Activated B cell treated with CpG ODN at 0.5 μM for 24 hours (primary cell): ENCODE measurements at regions of chr6 and their contacts with region 1.

Region 1: DNA sequence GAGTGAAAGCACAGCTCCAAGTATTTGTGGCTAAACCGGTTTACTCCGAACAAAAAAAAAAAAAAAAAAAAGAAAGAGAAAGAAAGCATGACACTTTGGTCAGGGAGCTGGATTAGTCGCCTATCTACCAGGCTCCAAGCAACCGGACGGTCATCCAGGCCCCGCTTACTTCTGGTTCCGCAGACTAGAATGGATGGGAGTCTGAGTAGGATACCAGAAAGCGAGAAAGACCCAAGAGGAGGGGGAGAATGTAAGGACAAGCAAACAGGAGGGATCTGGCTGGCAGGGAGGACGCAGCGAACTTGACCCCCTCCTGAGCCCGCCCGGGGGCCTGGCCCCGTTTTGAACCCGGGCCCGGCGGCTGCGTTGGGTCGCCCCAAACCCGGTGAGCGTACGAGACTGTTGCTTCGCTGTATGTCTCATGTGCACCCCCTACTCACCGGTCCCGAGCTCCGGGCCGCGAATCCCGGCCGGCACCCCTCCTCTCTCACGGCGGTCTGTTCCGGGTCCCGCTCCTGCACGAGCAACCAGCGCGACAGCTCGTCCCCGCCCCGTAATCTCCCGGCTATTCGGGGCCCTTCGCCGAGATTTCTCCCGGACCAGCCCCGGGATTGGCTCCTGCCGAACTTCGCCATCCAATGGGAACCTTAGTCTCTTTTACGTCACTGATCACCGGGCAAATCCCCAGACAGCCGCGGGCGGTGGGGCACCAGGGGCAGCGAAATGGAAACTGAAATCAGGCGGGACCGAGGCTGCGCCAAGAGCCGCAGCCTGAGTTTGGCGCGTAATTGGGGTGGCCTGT is at the start of gene TRIM26:
- DNase-seq: peak; percentile 89
- ATAC-seq: peak; percentile 85
- H3K4me3 Mint-ChIP-seq: peak within 1 kb of the TSS; percentile 98
- H3K27ac Mint-ChIP-seq: peak within 1 kb of the TSS; percentile 99
- H3K4me1 Mint-ChIP-seq: peaks cover 61% of the 10 kb centered on the region
- H3K27me3 Mint-ChIP-seq: no peaks in the 10 kb centered on the region
- CTCF ChIP-seq: no peak
- total RNA-seq, gene TRIM26: 72.5 and 75.7 TPM in 2 replicates

Region 2: GRCh38 chr6:29926413-29927274 is 286.4 kb before region 1 on chr6:
- CTCF ChIA-PET with region 1: no interaction called
- POLR2A ChIA-PET with region 1: no interaction called
- intact Hi-C with region 1: no loop called
- DNase-seq: peak; percentile 50
- ATAC-seq: peak; percentile 77
- H3K4me3 Mint-ChIP-seq: peak overlapping the region; percentile 90
- H3K27ac Mint-ChIP-seq: peak overlapping the region; percentile 94
- H3K4me1 Mint-ChIP-seq: peaks cover 16% of the 10 kb centered on the region
- H3K27me3 Mint-ChIP-seq: no peaks in the 10 kb centered on the region
- CTCF ChIP-seq: no peak

Region 3: DNA sequence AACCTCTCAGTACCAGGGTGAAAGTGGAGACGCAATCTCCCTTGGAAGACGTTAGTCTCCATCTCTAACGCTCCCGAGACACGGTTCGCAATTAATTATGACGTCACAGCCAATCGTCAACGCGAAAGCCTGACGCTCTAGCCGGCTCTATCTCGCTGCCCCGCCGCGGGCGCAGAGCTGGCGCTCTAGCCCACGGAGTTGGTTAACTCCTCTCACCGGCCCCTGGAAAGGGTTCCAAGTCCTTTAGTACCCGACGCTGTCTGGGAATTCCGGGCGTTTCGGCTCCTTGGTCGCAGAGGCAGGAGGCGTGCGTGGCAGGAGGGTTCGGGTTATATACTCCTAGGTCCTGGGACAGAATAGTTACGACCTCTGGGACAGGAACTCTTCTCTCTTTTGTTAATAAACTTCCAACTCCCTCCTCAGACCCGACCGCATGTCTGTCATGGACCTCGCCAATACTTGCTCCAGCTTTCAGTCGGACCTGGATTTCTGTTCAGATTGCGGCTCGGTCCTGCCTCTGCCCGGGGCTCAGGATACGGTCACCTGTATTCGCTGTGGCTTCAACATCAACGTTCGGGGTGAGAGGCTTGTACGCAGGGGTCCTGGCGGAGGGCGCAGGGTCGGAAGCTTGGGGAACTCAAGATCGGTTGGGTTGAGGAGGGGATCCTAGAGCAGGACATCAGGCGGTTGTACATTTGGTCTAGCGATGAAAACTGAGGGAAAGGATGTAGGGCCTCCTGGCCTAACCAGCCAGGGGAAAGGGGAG is 151.8 kb before region 1 on chr6 and contains the start of gene POLR1H:
- CTCF ChIA-PET with region 1: no interaction called
- POLR2A ChIA-PET with region 1: interaction called, 15 read pairs
- intact Hi-C with region 1: no loop called
- DNase-seq: peak; percentile 73
- ATAC-seq: peak; percentile 91
- H3K4me3 Mint-ChIP-seq: peak within 1 kb of the TSS; percentile 98
- H3K27ac Mint-ChIP-seq: peak within 1 kb of the TSS; percentile 97
- H3K4me1 Mint-ChIP-seq: peaks cover 44% of the 10 kb centered on the region
- H3K27me3 Mint-ChIP-seq: no peaks in the 10 kb centered on the region
- CTCF ChIP-seq: no peak
- total RNA-seq, gene POLR1H: 44.1 and 50.5 TPM in 2 replicates

Region 4: DNA sequence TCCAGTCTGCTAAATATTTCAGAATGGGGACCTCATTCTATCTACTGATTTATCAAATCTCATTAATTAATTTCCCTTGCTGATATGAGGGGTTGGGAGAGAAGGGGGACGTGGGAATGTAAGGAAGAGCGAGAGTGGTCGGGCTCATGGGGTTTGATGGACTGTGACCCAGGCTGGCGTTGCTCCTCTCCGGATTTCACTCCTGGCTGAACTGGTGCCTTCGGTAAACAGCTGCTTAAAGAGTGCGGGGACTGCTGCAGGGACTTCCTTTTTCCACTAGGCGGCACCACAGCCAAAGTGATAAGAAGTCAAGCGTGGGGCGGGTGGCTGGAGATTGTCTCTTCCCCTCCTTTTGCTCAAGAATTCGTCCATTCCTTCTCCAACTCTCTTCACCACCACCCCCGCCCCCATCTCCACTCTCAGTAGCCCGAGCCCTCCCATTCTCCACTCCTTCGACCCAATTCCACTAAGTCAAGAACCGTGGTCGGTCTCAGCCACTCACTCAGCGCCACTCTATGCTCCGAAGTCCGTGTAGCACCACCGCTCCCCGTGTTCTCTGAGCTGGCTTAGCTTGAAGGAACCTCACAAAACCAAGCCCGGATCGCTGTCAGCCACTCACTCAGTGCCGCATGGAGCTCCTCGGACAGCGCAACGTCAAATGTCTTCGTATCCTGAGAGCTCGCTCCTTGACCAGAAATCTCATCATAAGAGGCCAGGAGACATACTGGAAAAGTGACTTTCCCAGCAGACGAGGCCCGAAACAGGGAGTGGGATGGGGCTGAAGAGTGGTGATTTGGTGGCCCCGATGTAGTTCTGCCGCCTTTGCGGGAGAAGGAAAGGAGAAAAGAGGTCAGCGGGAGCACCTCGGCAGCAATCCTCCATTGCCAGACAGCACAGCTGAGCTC is 109.8 kb before region 1 on chr6:
- CTCF ChIA-PET with region 1: interaction called, 3 read pairs
- POLR2A ChIA-PET with region 1: interaction called, 3 read pairs
- intact Hi-C with region 1: loop called (anchors 5 kb)
- DNase-seq: peak; percentile 68
- ATAC-seq: peak; percentile 83
- H3K4me3 Mint-ChIP-seq: peak overlapping the region; percentile 89
- H3K27ac Mint-ChIP-seq: peak overlapping the region; percentile 70
- H3K4me1 Mint-ChIP-seq: peaks cover 38% of the 10 kb centered on the region
- H3K27me3 Mint-ChIP-seq: peaks cover 47% of the 10 kb centered on the region
- CTCF ChIP-seq: peak; percentile 41

Region 5: GRCh38 chr6:30259140-30260035 is 46.3 kb after region 1 on chr6:
- CTCF ChIA-PET with region 1: no interaction called
- POLR2A ChIA-PET with region 1: interaction called, 15 read pairs
- intact Hi-C with region 1: loop called (anchors 1 kb)
- DNase-seq: peak; percentile 58
- ATAC-seq: peak; percentile 94
- H3K4me3 Mint-ChIP-seq: peak overlapping the region; percentile 98
- H3K27ac Mint-ChIP-seq: peak overlapping the region; percentile 97
- H3K4me1 Mint-ChIP-seq: peaks cover 36% of the 10 kb centered on the region
- H3K27me3 Mint-ChIP-seq: no peaks in the 10 kb centered on the region
- CTCF ChIP-seq: no peak

Region 6: GRCh38 chr6:30344868-30345671 is 132.0 kb after region 1 on chr6 and contains the start of gene RPP21:
- CTCF ChIA-PET with region 1: no interaction called
- POLR2A ChIA-PET with region 1: interaction called, 3 read pairs
- intact Hi-C with region 1: loop called (anchors 1 kb)
- DNase-seq: peak; percentile 90
- ATAC-seq: peak; percentile 99
- H3K4me3 Mint-ChIP-seq: peak within 1 kb of the TSS; percentile 92
- H3K27ac Mint-ChIP-seq: peak within 1 kb of the TSS; percentile 94
- H3K4me1 Mint-ChIP-seq: peaks cover 32% of the 10 kb centered on the region
- H3K27me3 Mint-ChIP-seq: no peaks in the 10 kb centered on the region
- CTCF ChIP-seq: no peak
- total RNA-seq, gene RPP21: 38.1 and 46.8 TPM in 2 replicates

Region 7: GRCh38 chr6:30678964-30679726 is 466.1 kb after region 1 on chr6:
- CTCF ChIA-PET with region 1: no interaction called
- POLR2A ChIA-PET with region 1: no interaction called
- intact Hi-C with region 1: loop called (anchors 5 kb)
- DNase-seq: peak; percentile 94
- ATAC-seq: peak; percentile 33
- H3K4me3 Mint-ChIP-seq: peak overlapping the region; percentile 92
- H3K27ac Mint-ChIP-seq: peak overlapping the region; percentile 99
- H3K4me1 Mint-ChIP-seq: peaks cover 62% of the 10 kb centered on the region
- H3K27me3 Mint-ChIP-seq: no peaks in the 10 kb centered on the region
- CTCF ChIP-seq: peak; percentile 73